Natural killer cell (primary cell): ENCODE measurements at regions of chr12 and their contacts with region 1.

Region 1: GRCh38 chr12:108562348-108563135 is at the start of gene ISCU:
- DNase-seq: peak; percentile 99 to 100
- ATAC-seq: peak; percentile 76 to 92 (median 77)
- H3K4me3 ChIP-seq: peak within 1 kb of the TSS; percentile 97
- H3K4me3 Mint-ChIP-seq: peak within 1 kb of the TSS; percentile 100
- H3K27ac ChIP-seq: peak within 1 kb of the TSS; percentile 96
- H3K27ac Mint-ChIP-seq: peak within 1 kb of the TSS; percentile 99 to 100
- H3K4me1 ChIP-seq: peaks cover 38% of the 10 kb centered on the region
- H3K4me1 Mint-ChIP-seq: peaks cover 39 to 42% of the 10 kb centered on the region in 2 donors
- H3K27me3 ChIP-seq: no peaks in the 10 kb centered on the region
- H3K27me3 Mint-ChIP-seq: no peaks in the 10 kb centered on the region
- CTCF ChIP-seq: no peak
- total RNA-seq, gene ISCU: 86.9 to 103 (median 97.4) TPM

Region 2: DNA sequence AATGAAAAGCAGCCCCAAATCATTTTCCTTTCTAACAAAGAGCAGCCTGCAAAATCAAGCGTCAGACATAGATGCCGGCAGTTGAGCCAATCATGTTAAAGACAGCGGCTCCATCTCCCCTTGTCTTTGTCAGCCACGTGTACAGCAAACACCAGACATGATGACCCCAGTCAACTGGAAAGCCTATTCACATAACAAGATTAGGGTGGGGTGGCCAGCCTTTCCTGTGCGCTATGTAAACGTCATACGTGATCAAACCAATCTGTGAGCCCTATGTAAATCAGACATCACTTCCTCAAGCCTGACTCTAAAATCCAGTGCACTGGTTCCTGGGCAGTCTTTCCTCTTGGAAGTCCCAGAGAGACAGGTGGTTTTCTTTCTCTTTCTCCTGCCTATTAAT is 57.4 kb before region 1 on chr12:
- intact Hi-C with region 1: no loop called
- DNase-seq: no peak
- ATAC-seq: no peak
- H3K4me3 ChIP-seq: no peak overlapping the region
- H3K4me3 Mint-ChIP-seq: no peak overlapping the region
- H3K27ac ChIP-seq: no peak overlapping the region
- H3K27ac Mint-ChIP-seq: no peak overlapping the region
- H3K4me1 ChIP-seq: no peaks in the 10 kb centered on the region
- H3K4me1 Mint-ChIP-seq: no peaks in the 10 kb centered on the region
- H3K27me3 ChIP-seq: peaks cover 3% of the 10 kb centered on the region
- H3K27me3 Mint-ChIP-seq: peaks cover 30 to 60% of the 10 kb centered on the region in 2 donors
- CTCF ChIP-seq: no peak

Region 3: GRCh38 chr12:108514973-108515814 is 47.3 kb before region 1 on chr12 and contains the start of gene FICD:
- intact Hi-C with region 1: loop called (anchors 1 kb)
- DNase-seq: peak; percentile 96 to 99
- ATAC-seq: peak; percentile 94 to 97 (median 94)
- H3K4me3 ChIP-seq: peak within 1 kb of the TSS; percentile 75
- H3K4me3 Mint-ChIP-seq: peak within 1 kb of the TSS; percentile 93
- H3K27ac ChIP-seq: peak within 1 kb of the TSS; percentile 69
- H3K27ac Mint-ChIP-seq: peak within 1 kb of the TSS; percentile 85 to 95
- H3K4me1 ChIP-seq: peaks cover 29% of the 10 kb centered on the region
- H3K4me1 Mint-ChIP-seq: peaks cover 40 to 42% of the 10 kb centered on the region in 2 donors
- H3K27me3 ChIP-seq: no peaks in the 10 kb centered on the region
- H3K27me3 Mint-ChIP-seq: no peaks in the 10 kb centered on the region
- CTCF ChIP-seq: no peak
- total RNA-seq, gene FICD: 3.9 to 7.5 (median 6.6) TPM

Region 4: GRCh38 chr12:108633534-108634248 is 71.1 kb after region 1 on chr12 and contains the start of gene SELPLG:
- intact Hi-C with region 1: loop called (anchors 5 kb)
- DNase-seq: peak; percentile 84 to 95
- ATAC-seq: peak; percentile 38 to 84 (median 69)
- H3K4me3 ChIP-seq: peak within 1 kb of the TSS; percentile 58
- H3K4me3 Mint-ChIP-seq: peak within 1 kb of the TSS; percentile 100
- H3K27ac ChIP-seq: peak within 1 kb of the TSS; percentile 98
- H3K27ac Mint-ChIP-seq: peak within 1 kb of the TSS; percentile 92 to 100
- H3K4me1 ChIP-seq: peaks cover 86% of the 10 kb centered on the region
- H3K4me1 Mint-ChIP-seq: peaks cover 61% of the 10 kb centered on the region in 2 donors
- H3K27me3 ChIP-seq: no peaks in the 10 kb centered on the region
- H3K27me3 Mint-ChIP-seq: no peaks in the 10 kb centered on the region
- CTCF ChIP-seq: no peak
- total RNA-seq, gene SELPLG: 179 to 201 (median 201) TPM

Region 5: DNA sequence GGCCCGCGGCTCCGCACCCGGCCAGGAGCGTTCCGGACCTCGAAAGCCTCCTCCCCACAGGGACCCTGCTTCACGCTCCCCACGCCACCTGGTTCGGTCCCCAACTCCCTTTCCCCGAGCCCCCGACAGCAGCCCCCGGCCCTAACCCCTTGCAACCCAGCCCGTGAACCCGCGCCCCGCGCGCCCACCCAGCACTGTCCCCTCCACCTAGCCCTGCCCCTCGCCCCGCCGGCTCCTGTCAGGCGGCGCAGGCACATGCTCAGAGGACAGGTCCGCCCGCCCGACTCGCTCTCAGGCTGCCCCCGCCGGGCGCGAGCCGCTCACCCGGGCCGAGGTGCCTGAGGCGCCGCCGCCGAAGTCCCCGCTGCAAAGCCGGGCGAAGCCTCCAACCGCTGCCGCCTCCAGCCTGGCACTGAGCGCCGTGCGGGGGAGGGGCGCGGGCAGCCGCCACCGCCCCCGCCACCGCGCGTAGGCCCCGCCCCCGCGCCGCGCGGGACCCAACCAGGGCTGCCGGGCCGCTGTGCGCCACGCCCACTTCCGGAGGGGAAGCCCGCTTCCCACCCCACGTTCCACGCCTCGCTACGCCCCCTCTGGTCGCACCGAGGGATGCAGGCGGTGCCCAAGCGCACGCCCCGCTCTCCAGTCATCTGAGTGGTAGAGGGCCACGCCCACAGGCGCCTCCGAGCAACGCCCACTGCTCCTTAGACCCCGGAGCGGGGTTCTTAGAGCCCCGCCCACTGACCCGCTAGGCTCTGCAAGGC is 168.7 kb after region 1 on chr12 and contains the start of gene CORO1C:
- intact Hi-C with region 1: loop called (anchors 1 kb)
- DNase-seq: peak; percentile 96 to 98
- ATAC-seq: peak; percentile 82 to 94 (median 85)
- H3K4me3 ChIP-seq: peak within 1 kb of the TSS; percentile 76
- H3K4me3 Mint-ChIP-seq: peak within 1 kb of the TSS; percentile 93
- H3K27ac ChIP-seq: peak within 1 kb of the TSS; percentile 79
- H3K27ac Mint-ChIP-seq: peak within 1 kb of the TSS; percentile 89 to 97
- H3K4me1 ChIP-seq: peaks cover 21% of the 10 kb centered on the region
- H3K4me1 Mint-ChIP-seq: peaks cover 35 to 39% of the 10 kb centered on the region in 2 donors
- H3K27me3 ChIP-seq: no peaks in the 10 kb centered on the region
- H3K27me3 Mint-ChIP-seq: no peaks in the 10 kb centered on the region
- CTCF ChIP-seq: peak; percentile 82
- total RNA-seq, gene CORO1C: 28.9 to 43.5 (median 36.0) TPM

Region 6: DNA sequence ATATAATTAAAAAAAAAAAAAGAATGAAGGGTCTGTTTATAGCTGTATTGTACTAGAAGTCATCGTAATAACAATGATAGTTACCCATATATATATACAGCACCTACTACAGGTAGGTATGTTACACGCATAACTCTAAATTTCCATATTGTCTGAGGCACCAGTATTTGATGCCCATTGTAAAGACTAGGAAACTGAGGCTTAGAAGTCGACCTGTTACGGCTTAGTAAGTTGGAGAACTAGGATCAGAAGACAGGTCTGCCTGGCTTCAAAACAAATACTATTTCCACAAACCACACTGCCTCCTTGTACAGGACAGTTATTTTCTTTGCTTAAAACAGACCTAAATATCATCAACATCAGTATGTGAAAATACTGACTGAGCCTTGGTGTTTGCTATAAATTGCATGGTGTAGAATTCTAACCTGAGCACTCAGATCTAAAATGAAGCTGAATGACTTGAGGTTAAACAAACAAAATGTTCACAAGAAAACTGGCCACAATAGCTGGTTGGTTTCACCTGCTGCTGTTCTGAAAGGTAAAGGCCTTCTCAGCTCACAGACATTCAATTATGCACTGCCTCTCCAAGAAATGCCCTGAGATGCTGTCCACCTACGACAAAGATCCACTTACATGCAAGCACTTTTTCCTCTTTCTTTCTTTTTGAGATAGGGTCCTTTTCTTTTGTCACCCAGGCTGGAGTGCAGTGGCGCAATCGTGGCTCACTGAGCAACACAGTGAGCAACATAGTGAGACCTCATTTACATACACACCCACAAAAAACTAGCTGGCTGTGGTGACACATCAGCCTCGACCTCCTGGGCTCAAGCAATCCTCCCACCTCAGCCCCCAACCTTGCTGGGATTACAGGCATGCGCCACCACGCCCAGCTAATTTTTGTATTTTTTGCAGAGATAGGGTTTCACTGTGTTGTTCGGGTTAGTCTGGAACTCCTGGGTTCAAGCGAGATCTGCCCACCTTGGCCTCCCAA is 259.2 kb after region 1 on chr12:
- intact Hi-C with region 1: no loop called
- DNase-seq: peak in 1 of 2 donors; percentile 40
- ATAC-seq: peak; percentile 70 to 78 (median 77)
- H3K4me3 ChIP-seq: no peak overlapping the region
- H3K4me3 Mint-ChIP-seq: peak overlapping the region; percentile 62
- H3K27ac ChIP-seq: peak overlapping the region; percentile 38
- H3K27ac Mint-ChIP-seq: peak overlapping the region; percentile 88 to 89
- H3K4me1 ChIP-seq: peaks cover 39% of the 10 kb centered on the region
- H3K4me1 Mint-ChIP-seq: peaks cover 58 to 66% of the 10 kb centered on the region in 2 donors
- H3K27me3 ChIP-seq: no peaks in the 10 kb centered on the region
- H3K27me3 Mint-ChIP-seq: no peaks in the 10 kb centered on the region
- CTCF ChIP-seq: no peak

Region 7: GRCh38 chr12:108838194-108839017 is 275.9 kb after region 1 on chr12:
- intact Hi-C with region 1: loop called (anchors 10 kb)
- DNase-seq: peak; percentile 81 to 83
- ATAC-seq: peak; percentile 91 to 97 (median 96)
- H3K4me3 ChIP-seq: no peak overlapping the region
- H3K4me3 Mint-ChIP-seq: peak overlapping the region; percentile 80
- H3K27ac ChIP-seq: peak overlapping the region; percentile 90
- H3K27ac Mint-ChIP-seq: peak overlapping the region; percentile 98 to 99
- H3K4me1 ChIP-seq: peaks cover 39% of the 10 kb centered on the region
- H3K4me1 Mint-ChIP-seq: peaks cover 74 to 75% of the 10 kb centered on the region in 2 donors
- H3K27me3 ChIP-seq: no peaks in the 10 kb centered on the region
- H3K27me3 Mint-ChIP-seq: no peaks in the 10 kb centered on the region
- CTCF ChIP-seq: no peak

Region 8: DNA sequence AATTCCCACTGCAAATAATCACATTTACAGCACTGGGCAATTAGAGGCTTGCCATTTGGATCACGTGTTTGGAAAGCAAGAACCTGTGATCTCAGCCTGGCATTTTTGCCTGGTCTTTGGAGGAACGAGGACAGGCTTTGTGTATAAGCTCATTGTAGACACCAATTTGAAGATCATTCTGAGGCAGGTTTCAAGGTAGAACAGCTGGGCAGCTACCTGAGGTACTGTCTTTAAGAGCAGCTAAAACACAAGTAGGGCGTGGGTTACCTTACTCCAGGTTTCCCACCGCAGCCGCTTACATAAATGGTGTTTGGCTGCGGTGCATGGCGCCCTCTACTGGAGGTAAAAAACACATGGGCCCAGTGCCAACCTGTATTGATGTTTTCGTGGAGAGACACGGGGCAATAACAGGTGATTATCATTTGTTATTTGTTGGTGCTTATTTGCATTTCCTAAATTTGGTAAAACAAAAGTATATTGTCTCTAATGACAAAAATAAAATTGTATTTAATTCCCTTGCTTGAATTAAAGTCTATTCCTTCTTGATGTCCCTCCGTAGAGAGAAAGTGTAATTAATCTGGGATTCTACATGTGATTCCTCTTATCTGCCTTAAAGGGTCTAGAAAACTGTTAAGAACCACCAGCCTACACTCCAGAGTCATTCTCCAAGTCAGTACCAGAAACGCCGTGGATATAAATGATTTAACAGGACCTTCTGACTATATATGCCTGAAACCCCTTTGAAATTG is 388.6 kb after region 1 on chr12:
- intact Hi-C with region 1: loop called (anchors 1 kb)
- DNase-seq: peak; percentile 61 to 86
- ATAC-seq: peak; percentile 75 to 89 (median 84)
- H3K4me3 ChIP-seq: no peak overlapping the region
- H3K4me3 Mint-ChIP-seq: no peak overlapping the region
- H3K27ac ChIP-seq: no peak overlapping the region
- H3K27ac Mint-ChIP-seq: no peak overlapping the region
- H3K4me1 ChIP-seq: peaks cover 5% of the 10 kb centered on the region
- H3K4me1 Mint-ChIP-seq: peaks cover 0 to 5% of the 10 kb centered on the region in 2 donors
- H3K27me3 ChIP-seq: no peaks in the 10 kb centered on the region
- H3K27me3 Mint-ChIP-seq: peaks cover 7 to 11% of the 10 kb centered on the region in 2 donors
- CTCF ChIP-seq: peak; percentile 92

Region 9: DNA sequence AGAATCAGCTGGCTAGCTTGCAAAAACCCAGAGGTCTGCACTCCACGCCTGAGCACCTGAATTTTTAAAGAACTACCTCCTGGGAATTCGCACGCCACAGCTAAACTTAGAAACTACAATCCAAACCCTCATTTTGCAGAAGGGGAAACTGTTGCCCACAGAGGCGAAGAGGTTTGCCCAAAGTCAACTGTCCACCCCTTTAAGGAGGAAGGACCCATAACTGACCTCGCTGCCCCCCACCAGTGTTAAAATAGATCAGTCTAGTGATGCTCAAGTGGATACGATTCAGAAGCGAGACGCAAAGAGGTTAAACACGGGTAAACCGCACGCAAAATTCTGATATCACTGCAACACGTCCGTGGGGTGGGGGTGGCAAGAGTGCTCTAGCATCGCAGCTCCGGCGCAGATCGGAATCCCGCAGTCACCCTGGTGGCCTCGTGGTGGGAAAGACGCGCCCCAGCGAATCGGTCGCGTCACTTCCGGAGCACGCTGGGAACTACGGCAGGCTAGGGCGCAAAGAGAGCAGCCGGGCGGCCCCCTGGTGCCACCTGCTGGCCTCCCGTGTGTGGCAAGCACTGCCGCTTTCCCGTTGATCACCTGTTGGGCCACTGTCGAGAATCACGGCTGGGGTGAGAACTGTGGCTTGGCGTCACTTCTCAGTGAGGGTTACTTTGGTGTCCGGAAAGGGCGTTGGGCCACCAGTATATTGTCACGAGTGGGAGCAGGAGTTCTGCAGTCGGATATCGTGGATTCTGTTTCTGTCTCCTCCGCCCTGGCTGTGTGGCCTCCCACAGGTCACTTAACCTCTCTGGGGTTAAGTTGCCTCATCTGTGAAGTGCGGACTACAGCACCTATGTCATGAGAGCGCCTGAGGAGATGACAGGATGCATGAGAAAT is 530.7 kb after region 1 on chr12 and contains the start of gene ALKBH2:
- intact Hi-C with region 1: loop called (anchors 1 kb)
- DNase-seq: peak; percentile 96 to 98
- ATAC-seq: peak; percentile 82 to 92 (median 82)
- H3K4me3 ChIP-seq: peak within 1 kb of the TSS; percentile 58
- H3K4me3 Mint-ChIP-seq: peak within 1 kb of the TSS; percentile 86
- H3K27ac ChIP-seq: peak within 1 kb of the TSS; percentile 63
- H3K27ac Mint-ChIP-seq: peak within 1 kb of the TSS; percentile 90 to 93
- H3K4me1 ChIP-seq: peaks cover 30% of the 10 kb centered on the region
- H3K4me1 Mint-ChIP-seq: peaks cover 26 to 33% of the 10 kb centered on the region in 2 donors
- H3K27me3 ChIP-seq: no peaks in the 10 kb centered on the region
- H3K27me3 Mint-ChIP-seq: no peaks in the 10 kb centered on the region
- CTCF ChIP-seq: peak; percentile 93
- total RNA-seq, gene ALKBH2: 10.9 to 12.6 (median 11.9) TPM